Posterior vena cava (tissue), 2 donors: ENCODE measurements at regions of chr16 and their contacts with region 1.

Region 1: GRCh38 chr16:52212841-52213240 is 334.1 kb downstream of the TOX3 start:
- DNase-seq: no peak

Region 2: DNA sequence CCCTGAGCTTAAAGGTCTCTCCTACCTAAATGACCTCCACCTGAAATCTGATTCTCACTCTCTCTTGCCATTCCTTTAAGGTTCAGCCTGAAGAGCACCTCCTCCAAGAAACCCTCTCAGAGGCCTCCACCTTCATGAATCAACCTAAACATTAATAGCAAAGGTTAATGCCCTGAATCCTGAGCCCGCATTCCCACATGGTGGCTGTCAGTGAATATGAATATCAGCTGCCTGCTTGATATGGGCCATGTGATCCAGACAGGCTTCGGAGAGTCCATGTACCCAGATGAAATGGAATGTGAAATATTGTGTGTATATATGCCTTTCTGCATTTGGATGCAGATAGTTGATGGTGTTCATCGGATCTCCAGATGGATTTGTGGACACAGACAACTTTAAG is 16.6 kb after region 1 on chr16:
- intact Hi-C with region 1: loop called in 1 of 2 experiments (anchors 1 kb)
- DNase-seq: no peak

Region 3: GRCh38 chr16:52265446-52265861 is 52.6 kb after region 1 on chr16:
- intact Hi-C with region 1: loop called in 1 of 2 experiments (anchors 2 kb)
- DNase-seq: no peak

Region 4: DNA sequence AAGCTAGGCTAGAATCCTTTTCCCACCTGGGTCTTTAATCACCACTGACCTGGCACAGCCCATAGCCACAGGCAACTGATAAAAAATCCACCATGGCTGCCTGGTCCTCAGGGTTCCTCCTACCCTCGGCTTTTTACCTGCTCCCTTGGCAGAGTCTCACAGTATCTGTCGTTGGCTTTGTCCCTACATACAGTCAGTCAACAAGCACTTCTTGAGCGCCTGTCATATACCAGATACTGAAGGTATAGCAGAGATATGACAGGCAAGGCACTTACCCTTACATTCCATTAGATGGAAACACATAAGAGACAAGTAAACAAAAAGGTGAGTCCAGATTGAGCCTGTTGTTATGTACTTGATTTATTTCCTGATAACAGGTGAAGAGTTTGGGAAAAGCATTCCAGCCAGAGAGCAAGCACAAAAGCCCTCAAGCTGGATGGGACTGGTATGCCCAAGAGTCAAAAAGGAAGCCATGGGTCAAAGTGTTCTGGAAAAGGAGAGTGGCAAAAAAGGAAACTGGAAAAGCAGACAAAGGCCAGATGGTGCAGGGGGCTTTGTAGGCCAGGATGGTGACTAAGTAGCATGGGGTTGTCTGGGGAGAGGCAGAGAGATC is 592.8 kb after region 1 on chr16:
- intact Hi-C with region 1: loop called in 1 of 2 experiments (anchors 5 kb)
- DNase-seq: no peak